Naive thymus-derived CD4-positive, alpha-beta T cell (primary cell): ENCODE measurements at regions of chr16 and their contacts with region 1.

Region 1: GRCh38 chr16:71484006-71484893 is 4.9 kb downstream of the ZNF19 start:
- DNase-seq: peak; percentile 57 to 90 (median 86)
- ATAC-seq: peak; percentile 91
- H3K4me3 ChIP-seq: peak overlapping the region; percentile 89
- H3K4me3 Mint-ChIP-seq: peak overlapping the region; percentile 82 to 95 (median 91)
- H3K27ac ChIP-seq: peak overlapping the region; percentile 92
- H3K27ac Mint-ChIP-seq: peak overlapping the region; percentile 85 to 97 (median 96)
- H3K4me1 ChIP-seq: peaks cover 7 to 10% of the 10 kb centered on the region in 2 donors
- H3K4me1 Mint-ChIP-seq: peaks cover 13 to 23% (median 17%) of the 10 kb centered on the region in 7 donors
- H3K27me3 ChIP-seq: no peaks in the 10 kb centered on the region
- H3K27me3 Mint-ChIP-seq: peaks cover 0 to 4% (median 0%) of the 10 kb centered on the region in 5 donors

Region 2: GRCh38 chr16:71288890-71289733 is 195.1 kb before region 1 on chr16 and contains the start of gene CMTR2:
- CTCF ChIA-PET with region 1: no interaction called
- POLR2A ChIA-PET with region 1: no interaction called
- intact Hi-C with region 1: loop called (anchors 1 to 2 kb)
- DNase-seq: peak; percentile 77 to 92 (median 87)
- ATAC-seq: peak; percentile 97
- H3K4me3 ChIP-seq: peak within 1 kb of the TSS; percentile 87
- H3K4me3 Mint-ChIP-seq: peak within 1 kb of the TSS; percentile 81 to 93 (median 89)
- H3K27ac ChIP-seq: peak within 1 kb of the TSS; percentile 82
- H3K27ac Mint-ChIP-seq: peak within 1 kb of the TSS; percentile 75 to 95 (median 92)
- H3K4me1 ChIP-seq: peaks cover 5 to 14% of the 10 kb centered on the region in 2 donors
- H3K4me1 Mint-ChIP-seq: peaks cover 21 to 36% (median 30%) of the 10 kb centered on the region in 7 donors
- H3K27me3 ChIP-seq: no peaks in the 10 kb centered on the region
- H3K27me3 Mint-ChIP-seq: peaks cover 13 to 26% (median 19%) of the 10 kb centered on the region in 5 donors
- total RNA-seq, gene CMTR2: 8.0 to 28.2 (median 22.3) TPM

Region 3: DNA sequence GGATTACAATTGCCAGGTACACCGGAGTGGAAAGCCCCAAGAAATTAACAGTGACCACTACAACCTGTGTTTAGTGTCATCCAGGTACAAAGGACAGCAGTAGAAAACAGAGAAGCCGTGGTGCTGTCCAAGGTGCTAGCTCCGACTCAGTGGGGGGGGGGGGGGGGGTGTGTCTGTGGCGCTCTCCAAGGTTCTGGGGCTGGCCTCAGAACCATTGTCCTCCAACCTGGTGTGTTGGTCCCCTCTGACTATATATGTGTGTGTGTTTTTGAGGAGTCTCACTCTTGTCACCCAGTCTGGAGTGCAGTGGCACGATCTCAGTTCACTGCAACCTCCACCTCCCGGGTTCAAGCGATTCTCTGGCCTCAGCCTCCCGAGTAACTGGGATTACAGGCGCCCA is 16.4 kb before region 1 on chr16:
- CTCF ChIA-PET with region 1: no interaction called
- POLR2A ChIA-PET with region 1: interaction called, 36 read pairs
- intact Hi-C with region 1: loop called in 1 of 2 experiments (anchors 1 kb)
- DNase-seq: peak; percentile 5 to 50 (median 34)
- ATAC-seq: peak; percentile 77
- H3K4me3 ChIP-seq: no peak overlapping the region
- H3K4me3 Mint-ChIP-seq: no peak overlapping the region
- H3K27ac ChIP-seq: no peak overlapping the region
- H3K27ac Mint-ChIP-seq: peak overlapping the region in 1 of 9 donors; percentile 44
- H3K4me1 ChIP-seq: no peaks in the 10 kb centered on the region
- H3K4me1 Mint-ChIP-seq: peaks cover 0 to 6% (median 5%) of the 10 kb centered on the region in 7 donors
- H3K27me3 ChIP-seq: no peaks in the 10 kb centered on the region
- H3K27me3 Mint-ChIP-seq: no peaks in the 10 kb centered on the region

Region 4: DNA sequence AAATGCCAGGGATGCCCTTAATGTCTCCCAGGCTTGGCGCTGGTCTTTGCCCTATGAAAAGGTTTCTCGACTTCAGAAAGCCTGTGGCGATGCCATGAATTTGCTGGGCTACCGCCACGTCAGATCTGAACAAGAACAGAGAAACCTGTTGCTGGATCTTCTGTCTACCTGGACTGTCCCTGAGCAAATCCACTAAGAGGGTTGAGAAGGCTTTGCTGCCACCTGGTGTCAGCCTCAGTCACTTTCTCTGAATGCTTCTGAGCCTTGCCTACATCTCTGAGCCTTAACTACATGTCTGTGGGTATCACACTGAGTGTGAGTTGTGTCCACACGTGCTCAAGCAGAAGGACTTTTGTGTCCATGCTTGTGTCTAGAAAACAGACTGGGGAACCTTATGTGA is 53.4 kb after region 1 on chr16:
- CTCF ChIA-PET with region 1: no interaction called
- POLR2A ChIA-PET with region 1: no interaction called
- intact Hi-C with region 1: no loop called
- DNase-seq: peak in 6 of 9 donors; percentile 5 to 28 (median 10)
- ATAC-seq: peak; percentile 55
- H3K4me3 ChIP-seq: no peak overlapping the region
- H3K4me3 Mint-ChIP-seq: no peak overlapping the region
- H3K27ac ChIP-seq: no peak overlapping the region
- H3K27ac Mint-ChIP-seq: no peak overlapping the region
- H3K4me1 ChIP-seq: no peaks in the 10 kb centered on the region
- H3K4me1 Mint-ChIP-seq: peaks cover 0 to 5% (median 4%) of the 10 kb centered on the region in 7 donors
- H3K27me3 ChIP-seq: no peaks in the 10 kb centered on the region
- H3K27me3 Mint-ChIP-seq: peaks cover 4 to 7% (median 5%) of the 10 kb centered on the region in 5 donors

Region 5: DNA sequence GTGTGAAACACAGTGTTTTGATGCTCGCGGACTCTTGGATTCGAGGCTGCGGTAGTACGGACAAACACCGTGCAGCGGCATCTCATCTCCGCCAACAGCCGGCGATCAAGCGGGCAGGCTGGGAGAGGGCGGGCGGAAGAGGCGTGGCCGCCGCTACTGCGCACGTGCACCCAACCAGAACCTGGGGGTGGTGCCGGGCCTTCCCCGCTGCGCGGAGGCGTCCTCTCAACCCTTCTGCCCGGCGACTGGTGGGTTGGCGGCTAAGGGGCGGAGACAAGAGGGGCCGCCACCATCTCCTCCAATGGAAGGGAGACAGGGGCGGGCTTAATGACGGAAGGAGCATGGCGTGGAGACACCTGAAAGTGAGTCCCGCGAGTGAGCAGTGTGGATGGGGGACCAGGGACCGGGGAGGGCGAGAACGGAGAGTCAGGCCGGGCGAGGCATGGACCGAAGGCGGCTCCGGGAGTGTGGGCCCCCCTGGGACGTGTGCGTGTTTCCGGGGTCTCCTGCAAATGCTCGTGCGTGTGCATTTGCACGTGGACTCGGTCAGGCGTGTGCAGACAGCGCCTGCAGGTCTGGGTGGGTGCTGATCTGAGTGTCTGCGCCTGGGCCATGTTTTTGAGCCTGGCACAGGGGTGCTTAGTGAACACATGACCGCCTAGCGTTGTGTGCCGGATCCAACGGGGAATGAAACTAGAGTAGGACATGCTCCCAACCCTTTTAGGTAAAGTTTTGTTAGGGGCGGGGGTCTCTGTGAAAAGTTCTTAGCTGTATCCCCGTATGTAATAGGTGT is 524.4 kb after region 1 on chr16 and contains the start of gene DHODH:
- CTCF ChIA-PET with region 1: no interaction called
- POLR2A ChIA-PET with region 1: no interaction called
- intact Hi-C with region 1: loop called in 1 of 2 experiments (anchors 1 kb)
- DNase-seq: peak; percentile 92 to 99 (median 97)
- ATAC-seq: peak; percentile 100
- H3K4me3 ChIP-seq: peak within 1 kb of the TSS; percentile 100
- H3K4me3 Mint-ChIP-seq: peak within 1 kb of the TSS; percentile 92 to 100 (median 98)
- H3K27ac ChIP-seq: peak within 1 kb of the TSS; percentile 62
- H3K27ac Mint-ChIP-seq: peak within 1 kb of the TSS; percentile 75 to 96 (median 89)
- H3K4me1 ChIP-seq: no peaks in the 10 kb centered on the region
- H3K4me1 Mint-ChIP-seq: peaks cover 9 to 22% (median 16%) of the 10 kb centered on the region in 7 donors
- H3K27me3 ChIP-seq: no peaks in the 10 kb centered on the region
- H3K27me3 Mint-ChIP-seq: peaks cover 0 to 3% (median 0%) of the 10 kb centered on the region in 5 donors
- total RNA-seq, gene DHODH: 4.9 to 15.6 (median 14.0) TPM